ENCODE measurements at regions of chr18 and their contacts with region 1.

Region 1: GRCh38 chr18:77016936-77017335 is 115.6 kb downstream of the MBP start:
- DNase-seq: no peak
- ATAC-seq: no peak
- H3K4me3 ChIP-seq: no peak overlapping the region
- H3K27ac ChIP-seq: no peak overlapping the region
- H3K4me1 ChIP-seq: no peaks in the 10 kb centered on the region; the same call in 1 of the 2 replicates
- H3K27me3 ChIP-seq: no peaks in the 10 kb centered on the region
- CTCF ChIP-seq: no peak

Region 2: DNA sequence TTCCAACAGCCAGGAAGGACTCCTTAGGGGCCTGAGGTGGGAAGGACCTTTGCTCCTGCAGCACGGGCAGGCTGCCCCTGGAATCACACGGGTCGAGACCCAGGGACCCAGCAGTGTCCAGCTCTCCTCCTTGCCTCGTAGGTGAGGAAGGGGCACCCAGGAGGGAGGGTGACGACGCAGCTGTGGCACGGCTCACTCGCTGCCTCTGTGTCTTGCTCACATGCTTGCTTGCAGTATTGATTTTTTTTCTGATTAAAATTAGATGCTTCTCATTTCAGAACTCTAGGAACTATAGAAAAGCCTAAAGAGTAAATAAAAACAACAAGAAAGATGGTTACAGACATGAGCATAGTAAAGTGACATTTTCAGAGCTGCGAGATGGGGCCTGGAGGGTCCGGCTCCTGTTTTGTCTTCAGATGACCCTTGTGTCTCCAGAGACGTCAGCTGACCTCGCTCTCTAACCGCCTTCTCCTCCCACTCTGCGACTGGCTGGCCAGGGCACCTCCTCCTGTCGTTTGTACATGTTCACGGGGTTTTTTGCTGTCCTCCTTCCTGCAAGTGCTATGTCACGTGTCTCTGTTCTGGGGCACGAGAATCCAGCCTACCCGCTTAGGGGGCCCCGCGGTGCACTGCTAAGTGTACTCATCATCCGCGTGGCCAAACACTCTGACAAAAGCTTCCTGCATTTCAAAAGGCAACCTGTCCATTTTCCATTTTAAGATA is 260.2 kb before region 1 on chr18:
- CTCF ChIA-PET with region 1: no interaction called
- POLR2A ChIA-PET with region 1: no interaction called
- in situ Hi-C with region 1: no loop called
- intact Hi-C with region 1: no loop called
- DNase-seq: no peak
- ATAC-seq: no peak
- H3K4me3 ChIP-seq: no peak overlapping the region
- H3K27ac ChIP-seq: no peak overlapping the region
- H3K4me1 ChIP-seq: no peaks in the 10 kb centered on the region
- H3K27me3 ChIP-seq: no peaks in the 10 kb centered on the region
- CTCF ChIP-seq: no peak

Region 3: DNA sequence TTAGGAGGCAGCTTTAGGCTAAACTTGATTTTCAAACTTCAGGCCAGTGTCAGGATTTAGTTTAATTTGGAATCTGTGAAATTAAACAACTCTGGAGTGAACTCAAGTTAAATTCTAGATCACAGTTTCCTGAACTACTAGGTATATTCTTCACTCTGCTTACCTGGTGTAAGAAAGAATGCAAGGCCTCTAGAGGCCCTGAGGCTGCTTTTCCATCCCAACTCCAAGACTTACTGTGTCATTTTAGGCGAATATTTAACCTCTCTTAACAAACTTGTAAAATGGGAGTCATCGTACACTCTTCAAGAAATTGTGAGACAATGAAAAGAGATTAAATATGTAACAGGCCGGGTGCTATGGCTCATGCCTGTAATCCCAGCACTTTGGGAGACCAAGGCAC is 219.6 kb before region 1 on chr18:
- CTCF ChIA-PET with region 1: interaction called, 10 read pairs
- POLR2A ChIA-PET with region 1: no interaction called
- in situ Hi-C with region 1: no loop called
- intact Hi-C with region 1: no loop called
- DNase-seq: no peak
- ATAC-seq: no peak
- H3K4me3 ChIP-seq: no peak overlapping the region
- H3K27ac ChIP-seq: no peak overlapping the region
- H3K4me1 ChIP-seq: no peaks in the 10 kb centered on the region
- H3K27me3 ChIP-seq: no peaks in the 10 kb centered on the region; the same call in 1 of the 2 replicates
- CTCF ChIP-seq: no peak

Region 4: DNA sequence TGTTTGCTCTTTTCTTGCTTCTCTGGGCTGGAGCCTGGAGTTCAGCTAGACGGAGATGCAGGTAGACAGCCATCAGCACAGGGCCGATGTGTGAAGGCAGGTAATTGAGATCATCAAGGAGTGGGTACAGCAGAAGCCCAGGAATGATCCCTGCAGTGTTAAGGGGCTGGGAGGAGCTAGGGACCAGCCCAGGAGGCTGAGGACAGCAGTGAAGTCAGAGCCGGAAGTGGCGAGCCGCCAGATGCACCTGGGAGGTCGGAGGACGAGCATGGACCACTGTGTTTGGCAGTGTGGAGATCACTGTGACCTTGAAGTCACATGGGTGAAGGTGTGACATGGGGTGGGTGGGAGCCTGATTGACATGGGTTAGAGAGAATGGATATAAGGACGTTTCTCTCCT is 200.8 kb before region 1 on chr18:
- CTCF ChIA-PET with region 1: no interaction called
- POLR2A ChIA-PET with region 1: no interaction called
- in situ Hi-C with region 1: no loop called
- intact Hi-C with region 1: no loop called
- DNase-seq: no peak
- ATAC-seq: no peak
- H3K4me3 ChIP-seq: no peak overlapping the region
- H3K27ac ChIP-seq: no peak overlapping the region
- H3K4me1 ChIP-seq: peaks cover 7% of the 10 kb centered on the region; the same call in 1 of the 2 replicates
- H3K27me3 ChIP-seq: no peaks in the 10 kb centered on the region
- CTCF ChIP-seq: no peak